Psoas muscle (tissue), 8 donors: ENCODE measurements at regions of chr2 and their contacts with region 1.

Region 1: GRCh38 chr2:175111200-175111657 is 56.8 kb downstream of the ATF2 start:
- DNase-seq: no peak
- ATAC-seq: peak in 2 of 4 donors; percentile 44 to 70
- H3K4me3 ChIP-seq: no peak overlapping the region
- H3K27ac ChIP-seq: no peak overlapping the region
- H3K4me1 ChIP-seq: no peaks in the 10 kb centered on the region
- H3K27me3 ChIP-seq: no peaks in the 10 kb centered on the region
- CTCF ChIP-seq: peak; percentile 81

Region 2: GRCh38 chr2:174873471-174873870 is 237.8 kb before region 1 on chr2:
- intact Hi-C with region 1: no loop called
- DNase-seq: no peak
- ATAC-seq: no peak
- H3K4me3 ChIP-seq: no peak overlapping the region
- H3K27ac ChIP-seq: no peak overlapping the region
- H3K4me1 ChIP-seq: peaks cover 3% of the 10 kb centered on the region
- H3K27me3 ChIP-seq: no peaks in the 10 kb centered on the region
- CTCF ChIP-seq: no peak

Region 3: DNA sequence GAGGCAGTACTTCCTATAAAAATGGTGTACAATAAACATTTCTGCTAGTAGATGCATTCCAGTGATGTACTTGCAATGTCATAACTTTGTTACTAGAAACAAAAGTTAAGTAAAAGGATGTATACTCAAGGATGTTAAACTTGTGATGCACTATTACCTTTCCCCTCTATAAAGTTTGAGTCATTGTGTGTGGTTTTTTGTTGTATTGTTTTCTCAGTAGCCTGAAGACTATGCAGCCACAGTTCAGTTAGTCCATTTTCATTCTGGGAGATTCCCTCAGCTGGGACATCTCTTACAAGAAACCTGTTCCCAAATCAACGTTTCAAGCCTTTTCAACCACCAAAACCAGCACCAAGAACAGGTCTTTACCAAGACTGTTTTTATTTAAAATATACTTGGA is 64.7 kb after region 1 on chr2:
- intact Hi-C with region 1: loop called in 1 of 2 experiments (anchors 5 kb)
- DNase-seq: no peak
- ATAC-seq: no peak
- H3K4me3 ChIP-seq: no peak overlapping the region
- H3K27ac ChIP-seq: no peak overlapping the region
- H3K4me1 ChIP-seq: peaks cover 29% of the 10 kb centered on the region
- H3K27me3 ChIP-seq: no peaks in the 10 kb centered on the region
- CTCF ChIP-seq: no peak

Region 4: DNA sequence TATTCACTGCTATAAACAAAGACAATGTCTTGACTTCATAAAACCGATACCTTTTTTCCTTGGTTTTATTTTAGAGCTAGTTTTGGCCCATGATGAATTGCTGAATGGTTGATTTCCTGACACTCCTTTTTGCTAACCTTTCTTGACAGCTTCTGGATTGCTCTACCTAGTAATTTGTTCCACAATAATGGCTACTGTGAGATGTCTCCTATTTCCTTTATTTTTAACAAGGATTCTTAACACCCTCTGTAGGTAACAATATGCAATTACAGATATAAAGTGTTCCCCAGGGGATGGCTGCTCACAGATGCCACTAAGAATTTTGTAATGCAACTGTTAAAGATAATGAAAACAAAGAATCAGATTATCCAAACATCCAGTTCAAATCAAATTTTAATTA is 171.1 kb after region 1 on chr2:
- intact Hi-C with region 1: loop called in 1 of 2 experiments (anchors 10 kb)
- DNase-seq: no peak
- ATAC-seq: no peak
- H3K4me3 ChIP-seq: no peak overlapping the region
- H3K27ac ChIP-seq: no peak overlapping the region
- H3K4me1 ChIP-seq: no peaks in the 10 kb centered on the region
- H3K27me3 ChIP-seq: no peaks in the 10 kb centered on the region
- CTCF ChIP-seq: peak; percentile 46